ENCODE measurements at regions of chr1 and their contacts with region 1.

Region 1: GRCh38 chr1:173202430-173203145 is 4.5 kb downstream of the TNFSF4 start:
- DNase-seq: peak; percentile 93
- H3K4me3 ChIP-seq: no peak overlapping the region
- H3K27ac ChIP-seq: peak overlapping the region; percentile 89
- H3K27me3 ChIP-seq: no peaks in the 10 kb centered on the region
- CTCF ChIP-seq: peak; percentile 66

Region 2: DNA sequence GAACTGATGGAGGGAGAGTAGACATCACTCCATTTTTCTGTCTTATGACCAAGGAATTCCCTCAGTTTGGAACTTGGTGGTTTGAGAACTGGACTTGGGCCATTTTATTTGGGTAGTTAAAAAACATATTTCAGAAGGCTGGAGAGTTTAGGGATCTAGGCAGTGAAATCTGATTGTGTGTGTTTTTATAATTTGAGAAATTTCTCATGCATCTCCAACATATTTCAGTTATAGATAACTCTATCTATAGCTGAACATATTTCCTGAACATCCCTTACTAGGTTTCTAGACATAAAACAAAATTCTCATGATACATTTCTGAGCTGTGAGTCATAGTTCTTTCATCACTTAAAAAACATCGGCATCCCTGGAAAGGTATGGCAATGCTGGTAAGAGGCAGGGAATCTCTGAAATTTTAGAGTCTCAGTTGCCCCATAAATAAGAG is 441.0 kb before region 1 on chr1:
- in situ Hi-C with region 1: loop called (anchors 25 kb)
- DNase-seq: peak; percentile 26
- H3K4me3 ChIP-seq: no peak overlapping the region
- H3K27ac ChIP-seq: peak overlapping the region; percentile 62
- H3K27me3 ChIP-seq: no peaks in the 10 kb centered on the region
- CTCF ChIP-seq: no peak

Measured in brain microvascular endothelial cell (primary cell).